ENCODE measurements at regions of chr13 and their contacts with region 1.

Region 1: GRCh38 chr13:26707122-26708006 is 53.2 kb downstream of the GPR12 start:
- DNase-seq: peak in 1 of 2 donors; percentile 71
- ATAC-seq: peak; percentile 59 to 87 (median 78)
- H3K4me3 ChIP-seq: no peak overlapping the region
- H3K4me3 Mint-ChIP-seq: no peak overlapping the region
- H3K27ac ChIP-seq: no peak overlapping the region
- H3K27ac Mint-ChIP-seq: no peak overlapping the region
- H3K4me1 ChIP-seq: no peaks in the 10 kb centered on the region
- H3K4me1 Mint-ChIP-seq: no peaks in the 10 kb centered on the region
- H3K27me3 ChIP-seq: no peaks in the 10 kb centered on the region
- H3K27me3 Mint-ChIP-seq: peaks cover 8 to 19% of the 10 kb centered on the region in 2 donors
- CTCF ChIP-seq: peak; percentile 59

Region 2: GRCh38 chr13:26022538-26023292 is 684.6 kb before region 1 on chr13:
- intact Hi-C with region 1: no loop called
- DNase-seq: no peak
- ATAC-seq: no peak
- H3K4me3 ChIP-seq: no peak overlapping the region
- H3K4me3 Mint-ChIP-seq: no peak overlapping the region
- H3K27ac ChIP-seq: no peak overlapping the region
- H3K27ac Mint-ChIP-seq: no peak overlapping the region
- H3K4me1 ChIP-seq: no peaks in the 10 kb centered on the region
- H3K4me1 Mint-ChIP-seq: peaks cover 0 to 7% of the 10 kb centered on the region in 2 donors
- H3K27me3 ChIP-seq: no peaks in the 10 kb centered on the region
- H3K27me3 Mint-ChIP-seq: peaks cover 18 to 43% of the 10 kb centered on the region in 2 donors
- CTCF ChIP-seq: no peak

Region 3: GRCh38 chr13:26872525-26873385 is 165.4 kb after region 1 on chr13:
- intact Hi-C with region 1: loop called (anchors 1 kb)
- DNase-seq: peak; percentile 46 to 71
- ATAC-seq: peak in 1 of 3 donors; percentile 68
- H3K4me3 ChIP-seq: no peak overlapping the region
- H3K4me3 Mint-ChIP-seq: no peak overlapping the region
- H3K27ac ChIP-seq: no peak overlapping the region
- H3K27ac Mint-ChIP-seq: no peak overlapping the region
- H3K4me1 ChIP-seq: no peaks in the 10 kb centered on the region
- H3K4me1 Mint-ChIP-seq: no peaks in the 10 kb centered on the region
- H3K27me3 ChIP-seq: no peaks in the 10 kb centered on the region
- H3K27me3 Mint-ChIP-seq: peaks cover 2 to 5% of the 10 kb centered on the region in 2 donors
- CTCF ChIP-seq: peak; percentile 66

Region 4: GRCh38 chr13:26929971-26930730 is 222.8 kb after region 1 on chr13:
- intact Hi-C with region 1: loop called (anchors 1 kb)
- DNase-seq: peak; percentile 63 to 75
- ATAC-seq: peak; percentile 73 to 92 (median 76)
- H3K4me3 ChIP-seq: no peak overlapping the region
- H3K4me3 Mint-ChIP-seq: no peak overlapping the region
- H3K27ac ChIP-seq: no peak overlapping the region
- H3K27ac Mint-ChIP-seq: no peak overlapping the region
- H3K4me1 ChIP-seq: peaks cover 5% of the 10 kb centered on the region
- H3K4me1 Mint-ChIP-seq: peaks cover 0 to 4% of the 10 kb centered on the region in 2 donors
- H3K27me3 ChIP-seq: peaks cover 3% of the 10 kb centered on the region
- H3K27me3 Mint-ChIP-seq: peaks cover 16 to 24% of the 10 kb centered on the region in 2 donors
- CTCF ChIP-seq: peak; percentile 96